PC-3 (cell line): ENCODE measurements at regions of chr1 and their contacts with region 1.

Region 1: DNA sequence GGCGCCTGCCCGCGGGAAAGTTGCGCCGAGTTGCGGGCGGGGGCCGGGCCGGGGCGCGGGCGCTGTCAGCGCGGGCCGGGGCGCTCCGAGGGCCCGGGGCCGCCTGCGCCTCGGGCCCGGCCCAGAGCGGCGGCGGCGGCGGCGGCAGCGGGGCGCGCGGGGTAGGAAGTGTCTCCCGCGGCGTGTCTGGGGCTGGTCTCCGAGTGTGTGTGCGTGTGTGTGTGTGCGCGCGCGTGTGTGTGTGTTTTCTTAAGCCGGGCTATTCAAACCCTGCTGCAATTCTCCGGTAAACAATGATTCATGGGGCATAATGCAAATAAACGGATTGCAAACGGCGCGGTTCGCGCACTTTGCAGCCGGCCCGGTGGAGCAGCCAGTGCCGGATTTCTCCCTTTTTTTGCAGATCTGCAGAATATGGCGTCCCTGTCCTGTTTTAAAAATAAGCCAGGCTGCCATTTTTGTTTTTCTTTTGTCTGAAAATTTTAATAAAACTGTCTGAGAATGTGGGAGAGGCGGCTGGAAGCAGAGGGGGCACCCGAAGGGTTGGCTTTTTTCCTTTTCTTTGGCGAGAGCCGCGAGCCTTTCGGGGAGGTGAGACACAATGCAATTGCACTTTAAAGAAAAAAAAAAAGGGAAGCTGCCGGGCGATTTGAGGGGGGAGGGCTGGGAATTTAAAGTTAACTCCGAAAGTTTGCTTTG is 558 bp downstream of the ZNF362 start:
- DNase-seq: peak; percentile 87
- ATAC-seq: peak; percentile 55
- H3K4me3 ChIP-seq: peak overlapping the region; percentile 89
- H3K27ac ChIP-seq: peak overlapping the region; percentile 88
- H3K4me1 ChIP-seq: peaks cover 13% of the 10 kb centered on the region; the same call in 1 of the 2 replicates
- H3K27me3 ChIP-seq: no peaks in the 10 kb centered on the region
- CTCF ChIP-seq: no peak

Region 2: DNA sequence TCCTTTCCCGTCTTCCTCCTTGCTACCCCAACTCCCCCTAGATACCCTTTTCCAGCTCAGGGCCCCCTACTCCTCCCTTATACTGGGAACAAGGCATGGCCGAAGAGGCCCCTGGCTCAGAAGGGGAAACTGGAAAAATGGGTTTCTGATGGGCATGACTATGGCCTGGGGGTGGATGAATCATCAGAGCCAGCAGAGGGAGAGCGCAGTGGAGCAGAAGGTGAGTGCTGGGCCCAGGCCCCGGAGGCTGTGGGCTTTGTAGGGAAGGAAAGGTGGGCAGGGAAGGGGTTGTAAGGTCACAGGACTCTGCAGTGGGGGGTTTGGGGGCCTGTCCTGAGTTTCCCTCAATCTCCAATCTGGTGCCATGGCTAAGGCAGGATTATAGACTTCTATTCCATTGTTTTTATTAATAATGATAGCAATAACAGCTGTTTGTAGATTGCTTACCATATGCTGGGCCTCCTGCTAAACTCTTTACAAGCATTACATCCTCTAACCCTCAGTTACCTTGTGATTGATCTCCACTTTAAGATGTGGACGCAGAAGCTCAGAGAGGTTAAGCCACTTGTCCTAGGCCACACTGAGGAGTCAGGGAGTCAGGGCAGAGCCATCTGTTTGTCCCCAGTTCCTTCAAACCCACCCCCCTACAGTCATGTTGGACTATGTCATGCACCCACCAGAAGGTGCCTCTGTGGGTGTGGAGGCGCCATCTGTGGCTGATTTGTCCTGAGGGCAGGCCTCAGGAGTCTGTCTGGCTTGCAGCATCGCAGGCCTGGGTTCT is 36.8 kb before region 1 on chr1:
- CTCF ChIA-PET with region 1: no interaction called
- POLR2A ChIA-PET with region 1: no interaction called
- intact Hi-C with region 1: loop called (anchors 5 kb)
- DNase-seq: peak; percentile 94
- ATAC-seq: peak; percentile 85
- H3K4me3 ChIP-seq: no peak overlapping the region
- H3K27ac ChIP-seq: peak overlapping the region; percentile 67
- H3K4me1 ChIP-seq: peaks cover 34% of the 10 kb centered on the region
- H3K27me3 ChIP-seq: no peaks in the 10 kb centered on the region
- CTCF ChIP-seq: no peak

Region 3: DNA sequence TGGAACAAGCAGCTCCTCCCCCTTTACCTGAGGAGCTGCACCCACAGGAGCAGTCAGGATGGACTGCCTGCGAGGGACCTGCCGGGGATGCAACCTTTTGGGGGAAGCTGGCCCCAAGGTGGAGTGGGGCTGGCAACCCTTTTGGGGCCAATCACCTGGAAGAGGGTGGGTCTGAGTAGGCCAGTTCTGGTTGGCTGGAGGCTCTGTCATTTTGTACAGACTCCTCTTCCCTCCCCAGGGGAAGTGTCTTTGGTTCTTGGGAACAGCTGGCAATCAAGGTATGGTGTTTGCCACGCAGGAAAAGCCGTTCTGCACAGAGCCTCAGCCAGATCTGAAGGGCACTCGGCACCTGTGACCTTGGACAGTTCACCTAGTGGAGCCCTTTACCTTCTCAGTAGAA is 64.3 kb after region 1 on chr1:
- CTCF ChIA-PET with region 1: no interaction called
- POLR2A ChIA-PET with region 1: interaction called, 11 read pairs
- intact Hi-C with region 1: no loop called
- DNase-seq: no peak
- ATAC-seq: peak; percentile 12
- H3K4me3 ChIP-seq: no peak overlapping the region
- H3K27ac ChIP-seq: no peak overlapping the region
- H3K4me1 ChIP-seq: peaks cover 10% of the 10 kb centered on the region
- H3K27me3 ChIP-seq: no peaks in the 10 kb centered on the region
- CTCF ChIP-seq: no peak